Activated CD4-positive, alpha-beta T cell treated with anti-CD3 and anti-CD28 coated beads for 36 hours (primary cell): ENCODE measurements at regions of chr20 and their contacts with region 1.

Region 1: DNA sequence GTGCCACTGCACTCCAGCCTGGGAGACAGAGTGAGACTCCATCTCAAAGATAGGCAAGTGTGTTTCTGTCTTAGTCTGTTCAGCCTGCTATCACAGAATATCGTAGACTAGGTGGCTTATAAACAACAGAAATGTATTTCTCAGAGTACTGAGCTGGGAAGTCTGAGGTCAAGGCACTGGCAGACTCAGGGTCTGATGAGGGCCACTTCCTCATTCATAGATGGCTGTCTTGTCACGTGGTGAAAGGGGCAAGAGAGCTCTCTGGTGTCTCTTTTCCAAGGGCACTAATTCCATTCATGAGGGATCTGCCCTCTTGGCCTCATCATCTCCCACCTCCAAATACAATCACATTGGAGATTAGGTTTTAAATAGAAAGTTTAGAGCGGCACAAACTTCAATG is 95.6 kb upstream of the PHACTR3 start:
- DNase-seq: no peak
- ATAC-seq: no peak
- H3K4me3 Mint-ChIP-seq: no peak overlapping the region
- H3K27ac Mint-ChIP-seq: no peak overlapping the region
- H3K4me1 Mint-ChIP-seq: no peaks in the 10 kb centered on the region
- H3K27me3 Mint-ChIP-seq: peaks cover 5% of the 10 kb centered on the region

Region 2: GRCh38 chr20:59385480-59385879 is 123.2 kb before region 1 on chr20:
- CTCF ChIA-PET with region 1: no interaction called
- POLR2A ChIA-PET with region 1: no interaction called
- intact Hi-C with region 1: no loop called
- DNase-seq: no peak
- ATAC-seq: peak; percentile 69
- H3K4me3 Mint-ChIP-seq: no peak overlapping the region
- H3K27ac Mint-ChIP-seq: no peak overlapping the region
- H3K4me1 Mint-ChIP-seq: peaks cover 8% of the 10 kb centered on the region
- H3K27me3 Mint-ChIP-seq: no peaks in the 10 kb centered on the region

Region 3: GRCh38 chr20:59495894-59496510 is 12.7 kb before region 1 on chr20:
- CTCF ChIA-PET with region 1: interaction called, 14 read pairs
- POLR2A ChIA-PET with region 1: no interaction called
- intact Hi-C with region 1: no loop called
- DNase-seq: peak; percentile 83
- ATAC-seq: peak; percentile 75
- H3K4me3 Mint-ChIP-seq: no peak overlapping the region
- H3K27ac Mint-ChIP-seq: no peak overlapping the region
- H3K4me1 Mint-ChIP-seq: no peaks in the 10 kb centered on the region
- H3K27me3 Mint-ChIP-seq: peaks cover 7% of the 10 kb centered on the region